OCI-LY7 (cell line): ENCODE measurements at regions of chr12 and their contacts with region 1.

Region 1: GRCh38 chr12:49623142-49623904 is at the start of gene PRPF40B:
- DNase-seq: peak; percentile 92
- H3K4me3 ChIP-seq: peak within 1 kb of the TSS; percentile 68
- H3K27ac ChIP-seq: peak within 1 kb of the TSS; percentile 82
- H3K4me1 ChIP-seq: peaks cover 30% of the 10 kb centered on the region
- CTCF ChIP-seq: peak; percentile 66
- total RNA-seq, gene PRPF40B: 11.3 and 17.0 TPM in 2 replicates

Region 2: DNA sequence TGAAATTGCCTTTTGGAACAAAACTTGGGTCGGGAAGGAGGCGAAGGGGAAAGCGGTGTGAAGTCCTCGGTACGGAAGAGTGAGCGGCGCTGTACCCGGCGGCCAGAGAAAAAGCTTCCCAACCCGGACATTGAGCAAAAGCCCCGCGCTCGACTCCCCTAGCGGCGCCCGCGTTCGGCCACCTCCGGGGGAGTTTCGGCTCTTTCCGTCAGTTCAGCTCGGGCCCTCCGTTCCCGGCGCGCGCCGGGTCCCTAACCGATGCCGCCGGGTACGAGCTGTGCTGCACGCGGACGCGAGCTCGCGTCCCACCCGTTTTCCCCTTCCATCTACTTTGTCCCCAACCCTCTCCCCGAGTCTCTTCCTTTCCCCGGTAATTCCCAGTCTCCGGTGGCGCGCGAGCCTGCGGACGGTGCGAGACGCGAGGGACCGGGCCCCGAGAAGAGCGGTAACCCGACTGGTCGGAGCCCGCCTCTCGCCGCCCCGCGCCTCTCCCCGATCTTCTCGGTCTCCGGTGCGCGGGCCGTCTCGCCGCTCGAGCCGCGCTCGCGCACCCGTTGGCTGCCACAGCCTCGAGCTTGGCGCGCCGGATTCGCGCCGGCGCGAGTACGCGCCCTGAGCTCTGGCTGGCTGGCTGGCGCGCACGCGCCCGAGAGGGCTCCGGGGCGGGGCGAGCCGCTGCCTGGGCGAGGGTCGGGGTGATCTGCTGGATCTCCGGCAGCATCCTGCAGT is 256.5 kb before region 1 on chr12:
- CTCF ChIA-PET with region 1: no interaction called
- POLR2A ChIA-PET with region 1: no interaction called
- intact Hi-C with region 1: loop called (anchors 5 kb)
- DNase-seq: peak; percentile 95
- H3K4me3 ChIP-seq: peak overlapping the region; percentile 91
- H3K27ac ChIP-seq: peak overlapping the region; percentile 88
- H3K4me1 ChIP-seq: peaks cover 34% of the 10 kb centered on the region
- CTCF ChIP-seq: peak; percentile 19; the same call in 1 of the 2 replicates

Region 3: DNA sequence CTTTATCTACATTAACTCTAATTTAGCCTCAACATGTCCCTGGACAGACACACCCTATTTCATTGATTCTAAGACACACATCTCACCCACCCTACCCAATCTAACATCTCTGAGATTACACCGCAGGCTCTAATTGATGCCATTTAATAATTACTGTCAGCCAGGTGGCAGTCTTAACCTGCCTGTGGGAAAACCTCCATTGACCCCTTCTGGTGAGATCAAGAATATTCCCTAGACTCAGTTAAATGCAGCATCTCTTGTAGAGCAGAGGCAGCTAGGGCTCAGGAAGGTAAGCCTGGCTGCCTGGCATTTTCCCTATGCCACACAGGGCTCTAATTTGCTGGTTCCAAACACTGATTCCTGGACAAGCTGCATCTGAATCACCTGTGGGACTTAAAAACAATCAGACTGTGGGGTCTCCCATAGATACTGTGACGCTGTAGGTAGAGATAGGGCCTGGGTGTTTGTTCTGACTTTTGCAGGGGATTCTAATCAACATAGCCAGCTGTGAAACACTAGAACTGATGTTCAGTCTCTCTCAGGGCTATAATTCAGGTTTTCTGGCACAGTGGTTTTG is 69.7 kb before region 1 on chr12:
- CTCF ChIA-PET with region 1: no interaction called
- POLR2A ChIA-PET with region 1: interaction called, 4 read pairs
- intact Hi-C with region 1: loop called (anchors 5 kb)
- DNase-seq: peak; percentile 81
- H3K4me3 ChIP-seq: no peak overlapping the region
- H3K27ac ChIP-seq: no peak overlapping the region
- H3K4me1 ChIP-seq: peaks cover 19% of the 10 kb centered on the region
- CTCF ChIP-seq: peak; percentile 94

Region 4: DNA sequence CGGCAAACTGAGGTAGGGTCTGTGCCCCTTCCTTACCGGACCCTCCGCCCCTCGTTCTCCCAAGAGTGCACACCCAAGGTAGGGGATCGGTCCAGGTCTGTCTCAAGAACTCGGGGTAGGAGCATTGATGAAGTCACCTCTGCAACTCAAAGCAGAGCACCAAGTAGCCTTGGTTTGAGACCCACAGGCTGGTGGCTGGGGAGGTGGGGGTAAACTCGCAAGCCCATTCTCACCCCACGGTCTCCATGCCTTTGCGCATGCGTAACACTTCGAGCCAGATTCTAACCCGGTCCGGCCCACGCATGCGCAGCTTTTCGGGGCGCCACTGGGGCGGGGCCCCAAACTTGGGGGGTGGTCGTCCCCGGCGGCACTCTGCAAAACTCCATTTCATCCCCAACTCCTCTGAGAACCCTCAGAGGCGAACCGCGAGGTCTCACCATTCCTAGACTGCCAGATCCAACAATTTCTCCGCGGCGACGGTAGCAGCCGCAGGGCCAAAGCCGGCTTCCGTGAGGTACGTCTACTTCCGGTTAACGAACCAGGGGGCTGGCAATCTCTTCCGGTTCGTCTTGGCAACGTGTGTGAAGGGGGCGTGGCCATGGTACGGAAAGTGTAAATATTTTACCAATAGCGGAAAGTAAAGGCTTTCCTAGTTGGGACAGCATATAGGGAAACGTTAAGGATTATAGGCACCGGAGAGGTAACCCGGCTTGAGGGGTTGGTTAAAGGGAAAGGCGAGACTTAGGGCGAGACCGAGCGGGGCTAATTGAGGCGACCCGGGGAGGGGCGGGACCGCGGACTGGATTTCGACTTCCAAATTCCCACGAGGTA is 55.5 kb before region 1 on chr12 and contains the start of gene MCRS1:
- CTCF ChIA-PET with region 1: no interaction called
- POLR2A ChIA-PET with region 1: interaction called, 3 read pairs
- intact Hi-C with region 1: loop called (anchors 2 kb)
- DNase-seq: peak; percentile 97
- H3K4me3 ChIP-seq: peak within 1 kb of the TSS; percentile 94
- H3K27ac ChIP-seq: peak within 1 kb of the TSS; percentile 54
- H3K4me1 ChIP-seq: peaks cover 19% of the 10 kb centered on the region
- CTCF ChIP-seq: no peak
- total RNA-seq, gene MCRS1: 72.0 and 75.6 TPM in 2 replicates

Region 5: GRCh38 chr12:49828133-49829091 is 205.1 kb after region 1 on chr12 and contains the start of gene NCKAP5L:
- CTCF ChIA-PET with region 1: no interaction called
- POLR2A ChIA-PET with region 1: no interaction called
- intact Hi-C with region 1: loop called (anchors 5 kb)
- DNase-seq: peak; percentile 94
- H3K4me3 ChIP-seq: peak within 1 kb of the TSS; percentile 72
- H3K27ac ChIP-seq: peak within 1 kb of the TSS; percentile 35
- H3K4me1 ChIP-seq: peaks cover 15% of the 10 kb centered on the region
- CTCF ChIP-seq: no peak
- total RNA-seq, gene NCKAP5L: 4.6 TPM in 2 replicates

Region 6: GRCh38 chr12:49842519-49843352 is 219.4 kb after region 1 on chr12 and contains the start of gene BCDIN3D:
- CTCF ChIA-PET with region 1: no interaction called
- POLR2A ChIA-PET with region 1: no interaction called
- intact Hi-C with region 1: loop called (anchors 5 kb)
- DNase-seq: peak; percentile 89
- H3K4me3 ChIP-seq: peak within 1 kb of the TSS; percentile 92
- H3K27ac ChIP-seq: peak within 1 kb of the TSS; percentile 74
- H3K4me1 ChIP-seq: peaks cover 34% of the 10 kb centered on the region
- CTCF ChIP-seq: no peak
- total RNA-seq, gene BCDIN3D: 7.5 and 8.4 TPM in 2 replicates

Region 7: GRCh38 chr12:50151047-50151687 is 527.8 kb after region 1 on chr12:
- CTCF ChIA-PET with region 1: no interaction called
- POLR2A ChIA-PET with region 1: no interaction called
- intact Hi-C with region 1: no loop called
- DNase-seq: no peak
- H3K4me3 ChIP-seq: no peak overlapping the region
- H3K27ac ChIP-seq: no peak overlapping the region
- H3K4me1 ChIP-seq: no peaks in the 10 kb centered on the region
- CTCF ChIP-seq: no peak